ENCODE measurements at regions of chr5 and their contacts with region 1.

Region 1: DNA sequence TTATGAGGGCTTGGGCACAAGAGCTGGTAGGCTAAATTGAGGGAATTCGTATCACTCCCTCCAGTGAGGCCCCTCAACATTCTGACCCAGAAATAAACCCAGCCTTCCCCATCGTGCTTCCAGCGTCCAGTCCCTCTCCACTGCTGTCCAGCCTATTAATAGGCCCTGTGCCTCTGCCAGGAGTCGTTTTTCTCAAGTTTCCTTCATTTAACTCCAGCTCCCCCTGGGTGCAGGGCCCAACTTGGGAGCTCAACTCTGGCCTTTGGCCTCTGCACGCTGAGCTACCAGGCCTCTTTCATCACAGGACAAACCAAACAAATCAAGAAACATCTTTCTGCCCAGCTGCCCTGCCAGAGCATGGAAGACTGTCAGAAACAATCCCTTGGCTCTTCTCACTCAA is 10.0 kb downstream of the HBEGF start:
- DNase-seq: no peak
- H3K4me3 ChIP-seq: no peak overlapping the region
- CTCF ChIP-seq: no peak

Region 2: GRCh38 chr5:140302786-140303639 is 33.4 kb before region 1 on chr5 and contains the start of gene PFDN1:
- CTCF ChIA-PET with region 1: no interaction called
- POLR2A ChIA-PET with region 1: no interaction called
- DNase-seq: peak; percentile 69
- H3K4me3 ChIP-seq: peak within 1 kb of the TSS; percentile 83
- CTCF ChIP-seq: no peak

Region 3: GRCh38 chr5:140322751-140323731 is 13.3 kb before region 1 on chr5:
- CTCF ChIA-PET with region 1: interaction called, 10 read pairs
- POLR2A ChIA-PET with region 1: interaction called, 3 read pairs
- DNase-seq: peak; percentile 89
- H3K4me3 ChIP-seq: peak overlapping the region; percentile 21
- CTCF ChIP-seq: no peak